MCF 10A (cell line): ENCODE measurements at regions of chrX and their contacts with region 1.

Region 1: GRCh38 chrX:17242470-17242869 is 132.5 kb upstream of the NHS start:
- DNase-seq: peak; percentile 66
- H3K4me3 Mint-ChIP-seq: no peak overlapping the region
- H3K27ac Mint-ChIP-seq: no peak overlapping the region
- H3K4me1 Mint-ChIP-seq: no peaks in the 10 kb centered on the region
- H3K27me3 Mint-ChIP-seq: peaks cover 29% of the 10 kb centered on the region
- CTCF ChIP-seq: peak; percentile 64

Region 2: DNA sequence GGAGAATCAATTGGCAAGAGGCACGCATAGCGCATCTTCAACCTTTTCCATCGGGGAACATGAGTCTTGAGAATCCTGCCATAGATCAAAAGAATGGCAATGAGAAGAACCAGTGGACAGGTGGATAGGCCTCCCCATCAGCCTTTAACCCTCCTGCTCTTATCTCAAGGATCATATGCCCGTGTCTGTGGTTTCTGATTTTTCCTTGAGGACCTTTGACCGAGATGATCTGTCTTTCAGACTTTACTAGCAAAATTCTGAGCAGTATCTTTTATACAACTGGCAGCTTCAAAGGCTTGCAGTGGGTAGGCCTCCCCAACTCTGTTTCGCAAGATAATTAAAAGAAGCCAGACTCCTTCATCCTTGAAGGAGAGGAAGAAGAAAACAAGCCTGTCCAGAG is 121.7 kb before region 1 on chrX:
- CTCF ChIA-PET with region 1: interaction called, 17 read pairs
- POLR2A ChIA-PET with region 1: no interaction called
- intact Hi-C with region 1: loop called (anchors 2 kb)
- DNase-seq: no peak
- H3K4me3 Mint-ChIP-seq: no peak overlapping the region
- H3K27ac Mint-ChIP-seq: no peak overlapping the region
- H3K4me1 Mint-ChIP-seq: no peaks in the 10 kb centered on the region
- H3K27me3 Mint-ChIP-seq: no peaks in the 10 kb centered on the region
- CTCF ChIP-seq: no peak

Region 3: DNA sequence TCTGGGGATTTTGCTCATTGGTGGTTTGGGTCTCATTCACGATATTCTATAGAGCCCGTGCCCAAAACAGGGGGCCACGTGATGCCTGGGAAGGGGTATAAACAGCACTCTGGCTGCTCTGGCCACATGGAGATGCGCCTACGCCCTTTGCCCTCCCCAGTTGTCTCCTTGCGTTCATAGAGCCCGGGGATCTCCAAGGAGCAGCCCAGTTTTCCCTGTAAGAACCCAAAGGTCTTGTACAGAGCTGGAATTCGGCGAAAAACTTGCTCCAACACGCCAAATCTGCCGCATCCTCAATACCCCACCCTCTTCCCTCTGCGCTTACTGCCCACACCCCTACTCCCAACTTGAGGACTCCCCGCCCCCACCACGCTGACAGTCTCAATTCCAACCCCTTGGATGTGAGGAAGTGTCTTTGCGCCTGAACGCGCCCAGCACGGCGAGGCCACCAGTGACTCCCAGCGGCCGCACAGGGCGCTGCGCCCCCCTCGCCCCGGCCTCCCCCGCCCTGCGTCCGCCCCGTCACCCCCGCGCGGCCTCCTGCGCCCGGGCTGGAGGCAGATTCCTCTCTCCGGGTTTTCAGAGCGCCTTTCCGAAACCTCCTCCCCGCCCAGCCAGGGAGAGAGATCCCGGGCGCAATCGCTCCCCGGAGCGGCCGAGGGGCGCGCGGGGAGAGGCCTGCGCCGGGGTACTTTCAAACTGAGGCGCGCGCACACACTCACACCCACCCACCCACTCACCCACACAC is 132.3 kb after region 1 on chrX and contains the start of gene NHS:
- CTCF ChIA-PET with region 1: interaction called, 8 read pairs
- POLR2A ChIA-PET with region 1: no interaction called
- intact Hi-C with region 1: loop called (anchors 1 kb)
- DNase-seq: peak; percentile 71
- H3K4me3 Mint-ChIP-seq: peak within 1 kb of the TSS; percentile 74
- H3K27ac Mint-ChIP-seq: peak within 1 kb of the TSS; percentile 17
- H3K4me1 Mint-ChIP-seq: no peaks in the 10 kb centered on the region
- H3K27me3 Mint-ChIP-seq: no peaks in the 10 kb centered on the region
- CTCF ChIP-seq: peak; percentile 52
- total RNA-seq, gene NHS: 3.6 and 6.2 TPM in 2 replicates

Region 4: GRCh38 chrX:17590892-17591740 is 348.6 kb after region 1 on chrX:
- CTCF ChIA-PET with region 1: interaction called, 90 read pairs
- POLR2A ChIA-PET with region 1: interaction called, 7 read pairs
- intact Hi-C with region 1: loop called (anchors 1 kb)
- DNase-seq: peak; percentile 79
- H3K4me3 Mint-ChIP-seq: peak overlapping the region; percentile 38
- H3K27ac Mint-ChIP-seq: peak overlapping the region; percentile 30
- H3K4me1 Mint-ChIP-seq: peaks cover 30% of the 10 kb centered on the region
- H3K27me3 Mint-ChIP-seq: peaks cover 14% of the 10 kb centered on the region
- CTCF ChIP-seq: peak; percentile 86

Region 5: DNA sequence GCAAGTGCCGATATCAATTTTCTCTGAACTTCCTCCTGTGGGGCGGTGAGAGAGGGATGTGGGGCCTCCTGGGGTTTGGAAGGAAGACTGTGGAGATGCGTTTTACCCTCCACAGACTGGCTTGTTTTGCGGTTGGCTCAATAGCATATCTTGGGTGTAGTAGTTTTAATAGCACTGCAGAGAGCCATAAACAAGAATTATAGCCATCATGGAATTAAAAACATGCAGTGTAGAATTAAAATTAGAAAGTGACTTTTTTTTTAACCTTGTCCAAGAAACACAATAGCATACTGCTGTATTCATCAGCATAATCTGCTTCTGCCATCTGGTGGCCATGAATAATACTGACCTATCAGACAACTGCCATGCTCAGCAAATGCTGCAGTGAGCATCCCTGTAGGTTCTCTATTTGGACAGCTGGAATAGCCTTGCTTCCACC is 447.5 kb after region 1 on chrX:
- CTCF ChIA-PET with region 1: interaction called, 35 read pairs
- POLR2A ChIA-PET with region 1: no interaction called
- intact Hi-C with region 1: loop called (anchors 1 kb)
- DNase-seq: peak; percentile 73
- H3K4me3 Mint-ChIP-seq: no peak overlapping the region
- H3K27ac Mint-ChIP-seq: no peak overlapping the region
- H3K4me1 Mint-ChIP-seq: no peaks in the 10 kb centered on the region
- H3K27me3 Mint-ChIP-seq: peaks cover 36% of the 10 kb centered on the region
- CTCF ChIP-seq: peak; percentile 64

Region 6: GRCh38 chrX:17736856-17737706 is 494.6 kb after region 1 on chrX and contains the start of gene SCML1:
- CTCF ChIA-PET with region 1: no interaction called
- POLR2A ChIA-PET with region 1: no interaction called
- intact Hi-C with region 1: no loop called
- DNase-seq: peak; percentile 92
- H3K4me3 Mint-ChIP-seq: peak within 1 kb of the TSS; percentile 76
- H3K27ac Mint-ChIP-seq: peak within 1 kb of the TSS; percentile 79
- H3K4me1 Mint-ChIP-seq: peaks cover 12% of the 10 kb centered on the region
- H3K27me3 Mint-ChIP-seq: peaks cover 10% of the 10 kb centered on the region
- CTCF ChIP-seq: no peak
- total RNA-seq, gene SCML1: 13.9 and 14.1 TPM in 2 replicates